ENCODE measurements at regions of chr7 and their contacts with region 1.

Region 1: GRCh38 chr7:148871030-148871429 is 13.1 kb downstream of the EZH2 start:
- H3K4me3 ChIP-seq: no peak overlapping the region
- H3K27ac ChIP-seq: no peak overlapping the region
- H3K4me1 ChIP-seq: no peaks in the 10 kb centered on the region
- CTCF ChIP-seq: no peak

Region 2: GRCh38 chr7:148856891-148857290 is 14.1 kb before region 1 on chr7:
- CTCF ChIA-PET with region 1: interaction called, 10 read pairs
- POLR2A ChIA-PET with region 1: no interaction called
- H3K4me3 ChIP-seq: no peak overlapping the region
- H3K27ac ChIP-seq: no peak overlapping the region
- H3K4me1 ChIP-seq: no peaks in the 10 kb centered on the region
- CTCF ChIP-seq: no peak

Measured in HEK293 (cell line).